Posterior vena cava (tissue), 2 donors: ENCODE measurements at regions of chr14 and their contacts with region 1.

Region 1: GRCh38 chr14:99604283-99604765 is 317 bp upstream of the CCDC85C start:
- DNase-seq: peak; percentile 97

Region 2: DNA sequence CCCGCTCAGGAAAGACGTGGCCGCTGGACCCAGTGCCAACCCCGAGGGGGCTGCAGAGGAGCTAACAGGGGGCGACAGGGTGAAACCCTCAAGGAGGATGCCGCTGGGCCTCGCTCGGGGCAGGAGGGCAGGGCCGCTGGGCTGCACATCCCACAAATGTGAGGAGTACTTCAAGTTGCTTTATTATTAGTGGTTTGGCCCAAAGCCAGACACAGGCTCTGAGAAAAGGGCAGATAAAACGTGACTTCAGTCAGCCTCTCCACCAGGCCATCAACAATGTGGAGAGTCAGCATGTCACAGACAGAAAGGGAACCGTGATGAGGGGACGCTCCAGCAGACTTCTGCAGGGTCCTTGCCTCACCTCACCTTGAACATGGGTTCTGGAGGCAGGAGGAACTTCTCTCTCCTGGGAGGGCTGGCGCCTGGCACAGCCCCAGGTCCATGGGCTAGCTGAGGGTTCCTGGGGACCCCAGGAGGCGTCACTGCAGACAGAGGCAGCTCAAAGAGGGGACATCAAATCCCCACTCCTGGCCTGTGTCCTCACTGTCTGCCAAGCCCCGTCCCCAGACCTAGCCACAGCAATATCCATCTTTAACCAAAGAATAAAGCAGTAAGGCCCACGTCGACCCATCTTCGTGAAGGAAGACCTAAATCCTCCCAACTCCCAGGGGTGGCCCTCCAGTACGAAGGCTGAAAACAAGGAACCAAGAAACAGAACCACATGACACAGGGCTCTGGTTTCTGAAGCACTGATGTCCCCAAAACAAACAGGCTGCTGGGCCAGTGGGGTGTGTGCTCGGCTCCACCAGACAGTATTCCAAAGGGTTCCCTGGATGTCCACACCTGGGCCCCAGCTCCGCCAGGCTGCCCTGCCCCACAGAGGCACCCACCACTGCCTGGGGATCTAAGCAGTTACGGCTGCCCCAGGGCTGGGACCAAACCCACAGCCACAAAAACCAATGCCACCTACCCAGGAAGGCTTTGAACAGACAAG is 35.5 kb before region 1 on chr14:
- intact Hi-C with region 1: loop called in 1 of 2 experiments (anchors 5 kb)
- DNase-seq: no peak